A673 (cell line): ENCODE measurements at regions of chr10 and their contacts with region 1.

Region 1: GRCh38 chr10:10921826-10922461 is 95.7 kb upstream of the CELF2 start:
- DNase-seq: no peak
- H3K4me3 ChIP-seq: no peak overlapping the region
- H3K27ac ChIP-seq: no peak overlapping the region
- H3K4me1 ChIP-seq: no peaks in the 10 kb centered on the region
- H3K27me3 ChIP-seq: peaks cover 62% of the 10 kb centered on the region
- CTCF ChIP-seq: no peak

Region 2: GRCh38 chr10:10910634-10911033 is 11.3 kb before region 1 on chr10:
- CTCF ChIA-PET with region 1: no interaction called
- POLR2A ChIA-PET with region 1: interaction called, 13 read pairs
- intact Hi-C with region 1: no loop called
- DNase-seq: no peak
- H3K4me3 ChIP-seq: no peak overlapping the region
- H3K27ac ChIP-seq: no peak overlapping the region
- H3K4me1 ChIP-seq: no peaks in the 10 kb centered on the region
- H3K27me3 ChIP-seq: peaks cover 21% of the 10 kb centered on the region
- CTCF ChIP-seq: no peak

Region 3: GRCh38 chr10:11260170-11260569 is 338.2 kb after region 1 on chr10:
- CTCF ChIA-PET with region 1: no interaction called
- POLR2A ChIA-PET with region 1: no interaction called
- intact Hi-C with region 1: no loop called
- DNase-seq: no peak
- H3K4me3 ChIP-seq: no peak overlapping the region
- H3K27ac ChIP-seq: no peak overlapping the region
- H3K4me1 ChIP-seq: no peaks in the 10 kb centered on the region
- H3K27me3 ChIP-seq: peaks cover 84% of the 10 kb centered on the region
- CTCF ChIP-seq: no peak